MCF 10A (cell line): ENCODE measurements at regions of chr22 and their contacts with region 1.

Region 1: DNA sequence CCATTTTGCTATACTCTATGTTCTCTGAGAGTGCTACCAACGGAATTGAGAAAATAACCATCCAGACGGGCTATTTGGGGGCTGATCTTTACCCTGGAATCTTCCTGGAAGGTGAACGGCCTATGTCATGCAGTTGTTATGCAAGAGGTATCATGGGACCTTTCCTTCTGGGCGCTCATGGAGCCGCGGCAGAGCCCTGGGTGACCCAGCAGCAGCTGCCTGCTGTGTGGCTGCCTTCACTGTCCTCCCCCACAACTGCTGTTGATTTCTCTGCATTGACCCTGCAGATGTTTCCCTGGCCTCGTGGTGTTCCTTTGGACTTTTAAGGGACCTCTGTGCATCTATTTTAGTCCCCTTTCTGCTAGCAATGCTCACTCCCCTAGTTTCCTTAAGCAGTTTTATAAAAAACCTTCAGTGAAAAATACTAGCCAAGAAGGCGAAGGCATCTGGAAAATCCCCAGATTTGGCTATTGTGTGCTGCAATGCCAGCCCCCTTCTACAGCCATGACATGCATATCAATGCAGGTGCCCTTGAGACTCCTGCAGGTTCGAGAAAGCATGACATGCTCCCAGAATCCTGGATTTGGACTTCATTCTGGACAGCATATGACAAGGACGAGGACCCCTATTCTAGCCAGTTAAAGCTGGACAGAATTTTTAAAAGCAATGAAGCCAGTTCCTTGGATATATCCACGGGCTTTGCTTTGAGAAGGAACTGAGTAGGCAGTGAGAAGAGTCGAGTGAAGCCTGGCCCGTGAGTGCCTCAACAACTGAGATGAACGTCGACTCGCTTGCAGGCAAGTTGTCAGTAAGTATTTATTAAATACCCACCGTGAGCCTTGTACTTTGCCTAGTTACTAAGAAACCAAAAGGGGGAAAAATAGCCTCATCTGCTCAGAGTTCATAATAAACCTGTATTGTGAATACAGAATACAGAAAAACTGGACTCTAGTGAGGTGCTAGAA is at the start of gene SLC25A18:
- DNase-seq: no peak
- H3K4me3 Mint-ChIP-seq: no peak within 1 kb of the TSS
- H3K27ac Mint-ChIP-seq: no peak within 1 kb of the TSS
- H3K4me1 Mint-ChIP-seq: peaks cover 11% of the 10 kb centered on the region
- H3K27me3 Mint-ChIP-seq: no peaks in the 10 kb centered on the region
- CTCF ChIP-seq: no peak
- total RNA-seq, gene SLC25A18: 0.15 and 0.35 TPM in 2 replicates

Region 2: DNA sequence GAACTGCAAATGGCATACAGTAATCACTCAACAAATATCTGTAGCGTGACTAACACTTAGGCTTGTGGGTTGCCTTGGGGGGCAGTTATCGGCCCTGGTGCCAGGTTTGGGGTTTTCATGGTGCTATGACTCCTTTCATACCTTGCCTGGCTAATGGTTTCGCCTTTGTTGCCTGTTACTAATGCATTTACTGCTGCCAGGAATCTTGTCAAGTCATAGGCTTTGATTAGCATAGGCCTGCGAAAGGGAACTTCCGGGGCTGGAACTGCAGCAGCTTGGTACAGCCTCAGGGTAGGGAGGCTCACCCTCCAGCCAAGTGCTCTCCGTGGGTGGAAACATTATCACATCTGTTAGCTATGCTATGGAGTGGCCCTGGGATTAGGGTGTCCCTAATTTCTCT is 13.3 kb after region 1 on chr22:
- CTCF ChIA-PET with region 1: interaction called, 33 read pairs
- POLR2A ChIA-PET with region 1: interaction called, 11 read pairs
- intact Hi-C with region 1: no loop called
- DNase-seq: peak; percentile 99
- H3K4me3 Mint-ChIP-seq: peak overlapping the region; percentile 6
- H3K27ac Mint-ChIP-seq: peak overlapping the region; percentile 94
- H3K4me1 Mint-ChIP-seq: peaks cover 15% of the 10 kb centered on the region
- H3K27me3 Mint-ChIP-seq: no peaks in the 10 kb centered on the region
- CTCF ChIP-seq: no peak

Region 3: GRCh38 chr22:17597217-17597616 is 34.0 kb after region 1 on chr22:
- CTCF ChIA-PET with region 1: interaction called, 10 read pairs
- POLR2A ChIA-PET with region 1: no interaction called
- intact Hi-C with region 1: no loop called
- DNase-seq: no peak
- H3K4me3 Mint-ChIP-seq: no peak overlapping the region
- H3K27ac Mint-ChIP-seq: no peak overlapping the region
- H3K4me1 Mint-ChIP-seq: no peaks in the 10 kb centered on the region
- H3K27me3 Mint-ChIP-seq: no peaks in the 10 kb centered on the region
- CTCF ChIP-seq: no peak

Region 4: GRCh38 chr22:17612057-17612456 is 48.9 kb after region 1 on chr22:
- CTCF ChIA-PET with region 1: interaction called, 14 read pairs
- POLR2A ChIA-PET with region 1: no interaction called
- intact Hi-C with region 1: no loop called
- DNase-seq: no peak
- H3K4me3 Mint-ChIP-seq: no peak overlapping the region
- H3K27ac Mint-ChIP-seq: no peak overlapping the region
- H3K4me1 Mint-ChIP-seq: no peaks in the 10 kb centered on the region
- H3K27me3 Mint-ChIP-seq: no peaks in the 10 kb centered on the region
- CTCF ChIP-seq: no peak

Region 5: GRCh38 chr22:17706018-17706900 is 143.1 kb after region 1 on chr22:
- CTCF ChIA-PET with region 1: interaction called, 10 read pairs
- POLR2A ChIA-PET with region 1: interaction called, 13 read pairs
- intact Hi-C with region 1: loop called (anchors 5 kb)
- DNase-seq: peak; percentile 92
- H3K4me3 Mint-ChIP-seq: peak overlapping the region; percentile 79
- H3K27ac Mint-ChIP-seq: peak overlapping the region; percentile 87
- H3K4me1 Mint-ChIP-seq: peaks cover 17% of the 10 kb centered on the region
- H3K27me3 Mint-ChIP-seq: no peaks in the 10 kb centered on the region
- CTCF ChIP-seq: no peak